K562 (cell line): ENCODE measurements at regions of chr1 and their contacts with region 1.

Region 1: GRCh38 chr1:84603941-84604830 is 29.9 kb upstream of the CTBS start:
- DNase-seq: peak; percentile 32 to 80 (median 50)
- ATAC-seq: peak; percentile 92
- H3K4me3 ChIP-seq: peak overlapping the region; percentile 9; the same call in 1 of the 2 replicates
- H3K27ac ChIP-seq: no peak overlapping the region; the same call in 2 of the 3 replicates
- H3K4me1 ChIP-seq: peaks cover 7 to 14% of the 10 kb centered on the region in 2 experiments
- H3K27me3 ChIP-seq: no peaks in the 10 kb centered on the region
- CTCF ChIP-seq: peak; percentile 82 to 93 (median 91)
- EP300 ChIP-seq: no peak
- POLR2A ChIP-seq: no peak
- RAD21 ChIP-seq: peak; percentile 90 to 93

Region 2: GRCh38 chr1:83931658-83932253 is 672.4 kb before region 1 on chr1:
- CTCF ChIA-PET with region 1: no interaction called
- POLR2A ChIA-PET with region 1: no interaction called
- in situ Hi-C with region 1: no loop called
- intact Hi-C with region 1: loop called (anchors 5 kb)
- DNase-seq: peak; percentile 22 to 71 (median 44)
- ATAC-seq: peak; percentile 90
- H3K4me3 ChIP-seq: no peak overlapping the region
- H3K27ac ChIP-seq: no peak overlapping the region; the same call in 2 of the 3 replicates
- H3K4me1 ChIP-seq: peaks cover 0 to 7% of the 10 kb centered on the region in 2 experiments; a peak in 1 of 5 replicates
- H3K27me3 ChIP-seq: no peaks in the 10 kb centered on the region
- CTCF ChIP-seq: peak; percentile 54 to 79 (median 57); a peak in 4 of 6 replicates
- EP300 ChIP-seq: no peak; the same call in 1 of the 2 replicates
- POLR2A ChIP-seq: no peak
- RAD21 ChIP-seq: peak; percentile 90 to 93

Region 3: DNA sequence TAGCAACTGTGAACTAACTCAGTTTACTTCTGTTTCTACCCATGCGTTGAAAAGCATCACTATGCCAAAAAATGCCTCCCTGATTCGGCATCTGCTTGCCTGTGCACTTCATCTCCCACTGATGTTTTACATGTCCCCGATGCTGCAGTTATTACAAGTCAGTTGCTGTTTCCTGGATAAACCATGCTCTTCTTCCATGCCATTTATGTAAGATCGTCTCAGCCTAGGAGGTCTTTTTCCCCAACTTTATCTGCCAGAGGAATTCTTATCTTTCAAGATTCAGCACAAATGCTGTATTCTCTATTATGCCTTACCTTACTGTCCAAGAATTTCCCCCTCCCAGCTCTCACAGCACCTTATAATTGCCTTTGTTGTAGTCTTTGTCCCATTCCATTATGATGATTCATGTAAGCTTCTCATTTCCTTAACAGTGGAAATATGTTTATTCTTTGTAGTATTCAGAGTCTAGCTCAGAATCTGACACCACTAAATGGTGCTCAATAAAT is 430.1 kb before region 1 on chr1:
- CTCF ChIA-PET with region 1: no interaction called
- POLR2A ChIA-PET with region 1: no interaction called
- in situ Hi-C with region 1: no loop called
- intact Hi-C with region 1: no loop called
- DNase-seq: no peak
- ATAC-seq: no peak
- H3K4me3 ChIP-seq: no peak overlapping the region
- H3K27ac ChIP-seq: no peak overlapping the region
- H3K4me1 ChIP-seq: no peaks in the 10 kb centered on the region
- H3K27me3 ChIP-seq: no peaks in the 10 kb centered on the region
- CTCF ChIP-seq: no peak
- EP300 ChIP-seq: no peak
- POLR2A ChIP-seq: no peak
- RAD21 ChIP-seq: no peak

Region 4: DNA sequence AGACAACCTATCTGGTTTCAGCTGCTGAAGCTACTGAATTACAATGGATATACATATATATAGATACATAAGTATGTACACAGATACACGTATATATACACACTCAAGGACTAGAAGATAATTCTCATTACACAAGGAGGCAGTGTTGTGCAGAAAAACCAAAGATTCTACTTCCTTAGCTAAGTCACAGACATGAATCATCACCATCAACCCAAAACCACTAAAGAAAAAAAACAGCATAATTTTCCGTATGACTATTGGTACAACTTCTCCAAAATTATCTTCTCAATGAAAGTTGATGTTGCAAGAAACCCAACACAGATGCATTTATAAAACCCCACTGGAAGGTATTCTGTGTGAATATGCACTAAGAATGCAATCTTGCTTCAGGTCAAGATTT is 161.9 kb before region 1 on chr1:
- CTCF ChIA-PET with region 1: interaction called, 7 read pairs
- POLR2A ChIA-PET with region 1: no interaction called
- in situ Hi-C with region 1: no loop called
- intact Hi-C with region 1: loop called (anchors 1 kb)
- DNase-seq: peak in 3 of 4 experiments; percentile 16 to 65 (median 34)
- ATAC-seq: peak; percentile 91
- H3K4me3 ChIP-seq: no peak overlapping the region
- H3K27ac ChIP-seq: no peak overlapping the region
- H3K4me1 ChIP-seq: no peaks in the 10 kb centered on the region; a peak in 1 of 5 replicates
- H3K27me3 ChIP-seq: no peaks in the 10 kb centered on the region
- CTCF ChIP-seq: peak; percentile 42 to 80 (median 52); a peak in 5 of 6 replicates
- EP300 ChIP-seq: no peak
- POLR2A ChIP-seq: no peak
- RAD21 ChIP-seq: peak; percentile 93 to 98

Region 5: DNA sequence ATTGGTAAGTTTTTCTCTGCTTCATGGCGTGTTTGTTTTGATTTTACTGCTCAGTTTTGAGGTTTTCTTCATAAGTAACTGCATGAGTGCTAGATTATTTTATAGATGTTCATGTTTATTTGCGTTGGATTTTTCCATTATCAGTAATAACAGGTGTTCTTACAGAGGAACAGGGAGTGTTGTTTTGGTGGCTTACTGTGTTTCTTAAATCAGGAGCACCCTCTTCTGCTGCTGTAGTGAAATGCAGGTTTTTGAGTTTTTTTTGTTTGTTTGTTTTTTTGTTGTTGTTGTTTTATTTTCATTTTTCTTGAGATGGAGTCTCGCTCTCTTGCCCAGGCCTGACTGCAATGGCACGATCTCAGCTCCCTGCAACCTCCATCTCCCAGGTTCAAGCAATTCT is 62.5 kb before region 1 on chr1:
- CTCF ChIA-PET with region 1: interaction called, 3 read pairs
- POLR2A ChIA-PET with region 1: no interaction called
- in situ Hi-C with region 1: no loop called
- intact Hi-C with region 1: loop called (anchors 5 kb)
- DNase-seq: peak in 1 of 4 experiments; percentile 9
- ATAC-seq: no peak
- H3K4me3 ChIP-seq: no peak overlapping the region
- H3K27ac ChIP-seq: no peak overlapping the region
- H3K4me1 ChIP-seq: no peaks in the 10 kb centered on the region
- H3K27me3 ChIP-seq: no peaks in the 10 kb centered on the region
- CTCF ChIP-seq: peak; percentile 25 to 58 (median 46); a peak in 3 of 6 replicates
- EP300 ChIP-seq: no peak
- POLR2A ChIP-seq: no peak
- RAD21 ChIP-seq: peak; percentile 43 to 71

Region 6: GRCh38 chr1:84735483-84735882 is 131.3 kb after region 1 on chr1:
- CTCF ChIA-PET with region 1: no interaction called
- POLR2A ChIA-PET with region 1: no interaction called
- in situ Hi-C with region 1: no loop called
- intact Hi-C with region 1: no loop called
- DNase-seq: no peak
- ATAC-seq: no peak
- H3K4me3 ChIP-seq: no peak overlapping the region
- H3K27ac ChIP-seq: no peak overlapping the region
- H3K4me1 ChIP-seq: peaks cover 0 to 5% of the 10 kb centered on the region in 2 experiments; a peak in 1 of 5 replicates
- H3K27me3 ChIP-seq: no peaks in the 10 kb centered on the region
- CTCF ChIP-seq: no peak
- EP300 ChIP-seq: no peak
- POLR2A ChIP-seq: no peak
- RAD21 ChIP-seq: no peak

Region 7: GRCh38 chr1:84772428-84772943 is 168.3 kb after region 1 on chr1:
- CTCF ChIA-PET with region 1: no interaction called
- POLR2A ChIA-PET with region 1: no interaction called
- in situ Hi-C with region 1: no loop called
- intact Hi-C with region 1: loop called (anchors 1 kb)
- DNase-seq: peak; percentile 78 to 87 (median 82)
- ATAC-seq: peak; percentile 96
- H3K4me3 ChIP-seq: no peak overlapping the region
- H3K27ac ChIP-seq: no peak overlapping the region
- H3K4me1 ChIP-seq: no peaks in the 10 kb centered on the region
- H3K27me3 ChIP-seq: peaks cover 2 to 10% of the 10 kb centered on the region in 2 experiments; a peak in 2 of 5 replicates
- CTCF ChIP-seq: peak; percentile 82 to 92 (median 89)
- EP300 ChIP-seq: no peak
- POLR2A ChIP-seq: no peak
- RAD21 ChIP-seq: peak; percentile 84 to 89